ENCODE measurements at regions of chr1 and their contacts with region 1.

Region 1: DNA sequence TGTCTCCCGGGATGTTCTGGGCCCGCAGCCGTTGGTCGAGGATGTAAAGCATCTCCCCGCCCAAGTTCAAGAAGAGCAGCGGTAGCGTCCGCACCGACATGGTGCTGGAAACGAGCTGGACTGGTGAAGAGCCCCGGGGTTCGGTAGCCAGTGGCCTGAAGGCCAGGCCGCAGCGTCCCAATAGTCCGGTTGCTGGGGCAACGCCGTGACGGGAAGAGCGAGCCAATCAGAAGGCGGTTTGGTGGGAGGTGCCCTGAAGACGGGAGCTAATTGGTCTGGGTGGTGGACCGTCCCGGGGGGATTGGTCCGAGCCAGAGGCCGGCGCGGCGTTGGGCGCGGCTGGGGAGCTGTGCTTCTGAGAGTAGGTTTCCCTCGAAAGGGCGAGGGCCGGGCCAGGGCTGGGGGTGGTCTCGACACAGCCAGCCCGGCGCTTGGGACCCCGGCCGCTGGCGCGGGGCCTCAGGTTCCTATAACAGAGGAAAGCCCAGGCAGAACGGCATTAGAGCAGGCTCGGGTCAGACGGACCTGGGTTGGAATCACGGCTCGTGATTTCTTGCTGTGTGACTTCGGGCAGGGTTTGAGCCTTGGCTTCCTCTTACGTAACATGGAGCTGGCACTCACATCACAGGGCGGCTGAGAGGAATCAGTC is at the start of gene OSCP1:
- DNase-seq: peak; percentile 100
- H3K4me3 ChIP-seq: peak within 1 kb of the TSS; percentile 74 to 80
- H3K27ac ChIP-seq: peak within 1 kb of the TSS; percentile 91 to 94
- H3K4me1 ChIP-seq: peaks cover 0 to 8% of the 10 kb centered on the region in 2 experiments; a peak in 1 of 4 replicates
- H3K27me3 ChIP-seq: no peaks in the 10 kb centered on the region
- CTCF ChIP-seq: no peak
- EP300 ChIP-seq: no peak
- RAD21 ChIP-seq: no peak
- polyA plus RNA-seq, gene OSCP1: 11.9 and 15.2 TPM in 2 replicates

Region 2: DNA sequence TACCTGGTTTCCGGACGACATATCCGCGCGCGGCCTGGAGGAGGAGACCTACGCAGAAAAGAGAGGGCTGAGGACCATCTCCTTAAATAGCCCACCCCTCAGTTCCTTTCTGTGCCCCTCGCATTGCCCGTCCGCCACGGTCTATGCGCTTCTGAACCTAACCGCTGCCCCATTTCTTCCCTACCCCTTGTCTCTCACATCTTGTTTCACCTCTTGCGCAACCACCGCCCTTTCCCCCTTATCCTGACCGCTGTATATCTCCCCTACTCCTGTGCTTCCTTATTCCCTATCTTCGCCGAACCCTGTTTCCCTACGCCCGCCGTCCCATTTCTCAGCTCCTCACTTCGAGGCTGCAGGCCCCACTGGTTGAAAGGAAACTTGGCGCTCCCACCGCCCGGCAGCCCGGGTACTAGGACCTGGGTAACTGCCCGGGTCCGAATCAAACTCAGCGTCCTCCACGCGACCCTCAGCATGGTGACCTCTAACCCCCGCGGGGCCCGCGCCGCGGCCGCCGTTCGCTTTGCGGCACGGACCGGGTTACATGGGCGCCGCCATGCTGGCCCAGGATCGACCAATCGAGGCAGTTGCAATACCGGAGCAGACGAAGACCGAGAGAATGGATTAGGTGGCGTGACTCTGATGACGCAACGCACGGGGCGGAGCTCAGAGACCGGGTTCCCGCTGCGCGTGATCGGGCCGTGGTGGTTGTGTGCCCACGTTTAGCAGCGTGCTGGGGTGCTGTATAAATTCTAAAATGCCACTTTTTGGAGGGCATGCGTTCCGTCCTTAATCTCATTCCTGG is 13.6 kb after region 1 on chr1 and contains the start of gene MRPS15:
- CTCF ChIA-PET with region 1: interaction called, 5 read pairs
- POLR2A ChIA-PET with region 1: interaction called, 22 read pairs
- DNase-seq: peak; percentile 96
- H3K4me3 ChIP-seq: peak within 1 kb of the TSS; percentile 91 to 98
- H3K27ac ChIP-seq: peak within 1 kb of the TSS; percentile 70 to 89
- H3K4me1 ChIP-seq: peaks cover 0 to 10% of the 10 kb centered on the region in 2 experiments; a peak in 2 of 4 replicates
- H3K27me3 ChIP-seq: no peaks in the 10 kb centered on the region
- CTCF ChIP-seq: no peak
- EP300 ChIP-seq: no peak
- RAD21 ChIP-seq: no peak
- polyA plus RNA-seq, gene MRPS15: 64.2 and 75.1 TPM in 2 replicates